HepG2 (cell line): ENCODE measurements at regions of chr7 and their contacts with region 1.

Region 1: DNA sequence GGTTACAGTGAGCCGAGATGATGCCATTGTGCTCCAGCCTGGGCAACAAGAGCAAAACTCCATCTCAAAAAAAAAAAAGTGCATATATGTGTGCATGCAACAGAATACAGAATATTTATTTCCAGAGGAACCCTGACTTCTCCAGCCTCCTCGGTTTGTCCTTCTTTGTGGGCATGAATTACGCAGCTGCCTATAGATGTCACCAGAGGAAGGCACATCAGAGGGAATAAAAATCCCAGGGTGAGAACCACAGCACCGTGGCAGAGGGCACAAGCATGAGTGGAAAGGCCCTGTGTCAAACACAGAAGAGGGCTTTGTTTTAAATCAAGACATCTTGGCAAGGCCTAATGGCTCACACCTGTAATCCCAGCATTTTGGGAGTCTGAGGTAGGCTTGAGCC is 24.4 kb upstream of the OCM2 start:
- DNase-seq: no peak
- ATAC-seq: no peak
- H3K4me3 ChIP-seq: no peak overlapping the region
- H3K27ac ChIP-seq: no peak overlapping the region
- H3K4me1 ChIP-seq: 0 out of 2 replicates have a peak, but pooled peaks cover 5% of the 10 kb centered on the region
- H3K27me3 ChIP-seq: 0 out of 5 replicates have a peak, but pooled peaks cover 0 to 3% of the 10 kb centered on the region in 2 experiments
- CTCF ChIP-seq: peak; percentile 21; the same call in 1 of the 2 replicates
- EP300 ChIP-seq: no peak
- POLR2A ChIP-seq: no peak
- RAD21 ChIP-seq: no peak

Region 2: DNA sequence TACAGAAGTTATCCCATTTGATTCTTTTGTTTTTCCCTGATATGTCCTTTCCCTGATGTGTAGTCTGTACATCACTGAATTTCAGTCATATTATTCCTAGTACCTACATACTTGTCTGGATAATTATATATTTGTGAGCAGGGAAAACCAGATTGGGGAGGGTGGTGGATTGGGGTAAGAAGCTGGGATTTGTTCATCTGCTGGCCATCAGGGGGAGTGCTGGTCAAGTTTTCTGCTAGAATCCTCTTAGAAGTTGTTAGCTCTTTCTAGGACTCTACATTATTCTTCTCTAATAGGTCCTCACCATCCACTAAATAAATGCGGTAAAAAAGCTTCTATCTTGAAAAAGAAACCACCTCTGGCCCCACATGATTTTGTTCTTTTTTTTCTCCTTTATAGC is 515.1 kb before region 1 on chr7:
- CTCF ChIA-PET with region 1: no interaction called
- POLR2A ChIA-PET with region 1: no interaction called
- in situ Hi-C with region 1: no loop called
- intact Hi-C with region 1: loop called (anchors 5 kb)
- DNase-seq: peak; percentile 27
- ATAC-seq: peak; percentile 73
- H3K4me3 ChIP-seq: no peak overlapping the region
- H3K27ac ChIP-seq: no peak overlapping the region
- H3K4me1 ChIP-seq: no peaks in the 10 kb centered on the region
- H3K27me3 ChIP-seq: no peaks in the 10 kb centered on the region
- CTCF ChIP-seq: peak; percentile 60
- EP300 ChIP-seq: no peak
- POLR2A ChIP-seq: no peak
- RAD21 ChIP-seq: no peak

Region 3: GRCh38 chr7:97845622-97846203 is 168.6 kb before region 1 on chr7:
- CTCF ChIA-PET with region 1: no interaction called
- POLR2A ChIA-PET with region 1: no interaction called
- in situ Hi-C with region 1: no loop called
- intact Hi-C with region 1: loop called (anchors 10 kb)
- DNase-seq: peak; percentile 9
- ATAC-seq: no peak
- H3K4me3 ChIP-seq: no peak overlapping the region
- H3K27ac ChIP-seq: no peak overlapping the region
- H3K4me1 ChIP-seq: peaks cover 7% of the 10 kb centered on the region; the same call in 1 of the 2 replicates
- H3K27me3 ChIP-seq: no peaks in the 10 kb centered on the region
- CTCF ChIP-seq: peak; percentile 37; the same call in 1 of the 2 replicates
- EP300 ChIP-seq: no peak
- POLR2A ChIP-seq: no peak
- RAD21 ChIP-seq: no peak

Region 4: GRCh38 chr7:98054585-98054984 is 40.2 kb after region 1 on chr7:
- CTCF ChIA-PET with region 1: no interaction called
- POLR2A ChIA-PET with region 1: no interaction called
- in situ Hi-C with region 1: no loop called
- intact Hi-C with region 1: no loop called
- DNase-seq: no peak
- ATAC-seq: no peak
- H3K4me3 ChIP-seq: no peak overlapping the region
- H3K27ac ChIP-seq: no peak overlapping the region
- H3K4me1 ChIP-seq: no peaks in the 10 kb centered on the region
- H3K27me3 ChIP-seq: peaks cover 4 to 21% of the 10 kb centered on the region in 2 experiments; a peak in 4 of 5 replicates
- CTCF ChIP-seq: no peak
- EP300 ChIP-seq: no peak
- POLR2A ChIP-seq: no peak
- RAD21 ChIP-seq: no peak

Region 5: DNA sequence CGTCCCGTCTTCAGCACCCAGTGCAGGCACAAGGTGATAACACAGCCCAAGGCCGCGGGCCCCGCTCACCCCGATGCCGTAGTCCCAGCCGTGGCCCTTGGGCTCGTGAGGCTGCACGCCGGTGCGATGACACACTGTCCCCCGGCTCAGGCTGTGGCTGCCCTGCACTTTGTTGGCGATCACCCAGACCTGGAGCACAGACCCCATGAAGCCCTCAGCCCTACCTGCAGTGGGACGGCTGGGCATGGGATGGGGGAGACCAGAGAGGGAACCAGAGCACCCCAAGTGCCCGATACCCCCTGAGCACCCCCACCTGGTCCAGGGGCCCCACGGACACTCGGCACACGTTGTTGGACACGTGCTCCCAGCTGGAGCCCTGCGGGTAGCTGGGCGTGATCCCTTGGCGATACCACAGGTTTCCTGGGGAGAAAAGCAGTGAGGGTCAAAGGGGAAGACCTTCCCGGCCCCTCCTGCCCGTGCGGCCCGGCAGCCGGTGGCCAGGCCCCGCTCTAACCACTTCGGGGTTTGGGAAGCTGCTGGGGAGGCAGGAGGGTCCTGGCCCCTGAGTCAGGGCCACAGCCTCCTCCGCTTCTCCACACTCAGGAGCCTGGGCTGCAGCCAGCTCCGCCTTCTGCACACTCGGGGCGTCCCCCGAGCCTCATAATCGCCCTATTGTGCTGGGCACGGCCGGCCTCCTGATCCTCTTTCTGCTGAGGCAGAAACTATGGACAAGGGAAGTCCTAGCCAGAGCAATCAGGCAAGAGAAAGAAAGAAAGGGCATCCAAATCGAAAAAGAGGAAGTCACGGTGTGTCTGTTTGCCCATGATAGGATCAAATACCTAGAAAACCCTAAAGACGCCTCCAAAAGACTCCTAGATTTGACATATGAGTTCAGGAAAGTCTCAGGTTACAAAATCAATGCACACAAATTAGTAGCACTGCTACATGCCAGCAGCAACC is 203.6 kb after region 1 on chr7:
- CTCF ChIA-PET with region 1: no interaction called
- POLR2A ChIA-PET with region 1: no interaction called
- in situ Hi-C with region 1: no loop called
- intact Hi-C with region 1: no loop called
- DNase-seq: peak; percentile 38
- ATAC-seq: peak; percentile 67
- H3K4me3 ChIP-seq: peak overlapping the region in 1 of 3 experiments; percentile 30; a peak in 1 of 6 replicates
- H3K27ac ChIP-seq: peak overlapping the region; percentile 10
- H3K4me1 ChIP-seq: peaks cover 22% of the 10 kb centered on the region
- H3K27me3 ChIP-seq: no peaks in the 10 kb centered on the region
- CTCF ChIP-seq: no peak
- EP300 ChIP-seq: no peak
- POLR2A ChIP-seq: no peak
- RAD21 ChIP-seq: no peak

Region 6: GRCh38 chr7:98240961-98241674 is 226.8 kb after region 1 on chr7:
- CTCF ChIA-PET with region 1: no interaction called
- POLR2A ChIA-PET with region 1: no interaction called
- in situ Hi-C with region 1: loop called (anchors 5 kb)
- intact Hi-C with region 1: no loop called
- DNase-seq: peak; percentile 27
- ATAC-seq: peak; percentile 85
- H3K4me3 ChIP-seq: no peak overlapping the region
- H3K27ac ChIP-seq: no peak overlapping the region
- H3K4me1 ChIP-seq: no peaks in the 10 kb centered on the region
- H3K27me3 ChIP-seq: no peaks in the 10 kb centered on the region
- CTCF ChIP-seq: peak; percentile 94
- EP300 ChIP-seq: no peak
- POLR2A ChIP-seq: no peak
- RAD21 ChIP-seq: peak; percentile 85